ENCODE measurements at regions of chr16 and their contacts with region 1.

Region 1: GRCh38 chr16:13919683-13920509 is at the start of gene ERCC4:
- DNase-seq: peak; percentile 99 to 100 (median 100)
- H3K4me3 ChIP-seq: peak within 1 kb of the TSS; percentile 59 to 94 (median 76)
- H3K27ac ChIP-seq: peak within 1 kb of the TSS; percentile 18 to 91 (median 71)
- H3K4me1 ChIP-seq: peaks cover 23 to 45% of the 10 kb centered on the region in 2 donors
- H3K27me3 ChIP-seq: no peaks in the 10 kb centered on the region
- CTCF ChIP-seq: peak; percentile 78 to 99 (median 95)
- POLR2A ChIP-seq: peak; percentile 53 to 77
- total RNA-seq, gene ERCC4: 7.0 to 27.9 (median 18.6) TPM

Region 2: GRCh38 chr16:13866073-13866472 is 53.8 kb before region 1 on chr16:
- intact Hi-C with region 1: loop called in 1 of 2 experiments (anchors 10 kb)
- DNase-seq: peak; percentile 70 to 92 (median 87)
- H3K4me3 ChIP-seq: no peak overlapping the region
- H3K27ac ChIP-seq: no peak overlapping the region
- H3K4me1 ChIP-seq: no peaks in the 10 kb centered on the region
- H3K27me3 ChIP-seq: peaks cover 3% of the 10 kb centered on the region
- CTCF ChIP-seq: peak; percentile 53 to 76 (median 68)
- POLR2A ChIP-seq: no peak

Region 3: GRCh38 chr16:14249291-14250032 is 329.6 kb after region 1 on chr16:
- intact Hi-C with region 1: loop called (anchors 5 to 10 kb)
- DNase-seq: peak; percentile 32 to 76 (median 44)
- H3K4me3 ChIP-seq: no peak overlapping the region
- H3K27ac ChIP-seq: no peak overlapping the region
- H3K4me1 ChIP-seq: no peaks in the 10 kb centered on the region
- H3K27me3 ChIP-seq: no peaks in the 10 kb centered on the region
- CTCF ChIP-seq: peak; percentile 66 to 81 (median 74)
- POLR2A ChIP-seq: no peak

Region 4: GRCh38 chr16:14285513-14286385 is 365.9 kb after region 1 on chr16:
- intact Hi-C with region 1: loop called in 1 of 2 experiments (anchors 10 kb)
- DNase-seq: peak; percentile 87 to 98 (median 94)
- H3K4me3 ChIP-seq: peak overlapping the region; percentile 25 to 81 (median 67)
- H3K27ac ChIP-seq: peak overlapping the region in 4 of 5 donors; percentile 68 to 92 (median 88)
- H3K4me1 ChIP-seq: no peaks in the 10 kb centered on the region
- H3K27me3 ChIP-seq: no peaks in the 10 kb centered on the region
- CTCF ChIP-seq: peak in 1 of 6 experiments; percentile 2
- POLR2A ChIP-seq: no peak

Region 5: DNA sequence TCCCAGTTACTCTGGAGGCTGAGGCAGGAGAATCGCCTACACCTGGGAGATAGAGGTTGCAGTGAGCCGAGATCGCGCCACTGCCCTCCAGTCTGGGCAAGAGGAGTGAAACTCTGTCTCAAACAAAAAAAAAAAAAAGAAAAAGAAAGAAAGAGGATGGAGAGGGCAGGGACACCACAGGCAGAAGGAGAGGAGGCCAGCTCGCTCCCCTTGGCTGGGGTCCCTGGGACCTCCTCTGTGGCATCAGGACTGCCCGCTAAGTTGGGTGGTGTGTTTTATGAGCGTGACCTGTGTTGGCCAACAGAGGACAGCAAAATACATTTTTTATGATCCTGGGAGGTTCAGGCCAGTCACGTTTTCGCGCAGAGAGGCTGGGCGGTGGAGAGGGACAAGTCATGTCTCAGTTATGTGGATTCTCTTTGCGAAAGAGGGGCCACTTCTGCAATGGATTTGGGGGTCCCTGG is 380.8 kb after region 1 on chr16:
- intact Hi-C with region 1: loop called in 1 of 2 experiments (anchors 5 kb)
- DNase-seq: peak; percentile 79 to 92 (median 87)
- H3K4me3 ChIP-seq: peak overlapping the region in 2 of 4 donors; percentile 26 to 100
- H3K27ac ChIP-seq: peak overlapping the region; percentile 39 to 95 (median 84)
- H3K4me1 ChIP-seq: peaks cover 14 to 24% of the 10 kb centered on the region in 2 donors
- H3K27me3 ChIP-seq: no peaks in the 10 kb centered on the region
- CTCF ChIP-seq: peak; percentile 44 to 90 (median 68)
- POLR2A ChIP-seq: peak in 1 of 2 donors; percentile 71